CD8-positive, alpha-beta memory T cell (primary cell): ENCODE measurements at regions of chr16 and their contacts with region 1.

Region 1: GRCh38 chr16:85448557-85449197 is 164.4 kb upstream of the GSE1 start:
- DNase-seq: peak; percentile 20 to 83 (median 66)
- H3K4me3 ChIP-seq: peak overlapping the region; percentile 19
- H3K4me3 Mint-ChIP-seq: peak overlapping the region; percentile 25 to 79 (median 77)
- H3K27ac ChIP-seq: no peak overlapping the region
- H3K27ac Mint-ChIP-seq: peak overlapping the region; percentile 85 to 93 (median 90)
- H3K4me1 ChIP-seq: peaks cover 42% of the 10 kb centered on the region
- H3K4me1 Mint-ChIP-seq: peaks cover 26 to 49% (median 36%) of the 10 kb centered on the region in 3 donors
- H3K27me3 ChIP-seq: no peaks in the 10 kb centered on the region
- H3K27me3 Mint-ChIP-seq: peaks cover 0 to 2% of the 10 kb centered on the region in 2 donors

Region 2: GRCh38 chr16:85402910-85403692 is 45.6 kb before region 1 on chr16:
- CTCF ChIA-PET with region 1: no interaction called
- POLR2A ChIA-PET with region 1: no interaction called
- DNase-seq: no peak
- H3K4me3 ChIP-seq: no peak overlapping the region
- H3K4me3 Mint-ChIP-seq: no peak overlapping the region
- H3K27ac ChIP-seq: peak overlapping the region; percentile 38
- H3K27ac Mint-ChIP-seq: no peak overlapping the region
- H3K4me1 ChIP-seq: no peaks in the 10 kb centered on the region
- H3K4me1 Mint-ChIP-seq: no peaks in the 10 kb centered on the region
- H3K27me3 ChIP-seq: no peaks in the 10 kb centered on the region
- H3K27me3 Mint-ChIP-seq: peaks cover 0 to 1% of the 10 kb centered on the region in 2 donors

Region 3: GRCh38 chr16:85420501-85421337 is 28.0 kb before region 1 on chr16:
- CTCF ChIA-PET with region 1: interaction called, 32 read pairs
- POLR2A ChIA-PET with region 1: no interaction called
- DNase-seq: peak; percentile 66 to 80 (median 74)
- H3K4me3 ChIP-seq: no peak overlapping the region
- H3K4me3 Mint-ChIP-seq: no peak overlapping the region
- H3K27ac ChIP-seq: no peak overlapping the region
- H3K27ac Mint-ChIP-seq: peak overlapping the region in 3 of 8 donors; percentile 29 to 47 (median 46)
- H3K4me1 ChIP-seq: peaks cover 9% of the 10 kb centered on the region
- H3K4me1 Mint-ChIP-seq: peaks cover 0 to 8% (median 2%) of the 10 kb centered on the region in 3 donors
- H3K27me3 ChIP-seq: no peaks in the 10 kb centered on the region
- H3K27me3 Mint-ChIP-seq: peaks cover 4 to 6% of the 10 kb centered on the region in 2 donors